Activated CD4-positive, alpha-beta T cell treated with anti-CD3 and anti-CD28 coated beads for 36 hours (primary cell): ENCODE measurements at regions of chr18 and their contacts with region 1.

Region 1: GRCh38 chr18:76450452-76451395 is 44.3 kb downstream of the ZNF516 start:
- DNase-seq: peak; percentile 39
- ATAC-seq: peak; percentile 56
- H3K4me3 Mint-ChIP-seq: peak overlapping the region; percentile 74
- H3K27ac Mint-ChIP-seq: peak overlapping the region; percentile 77
- H3K4me1 Mint-ChIP-seq: peaks cover 41% of the 10 kb centered on the region
- H3K27me3 Mint-ChIP-seq: peaks cover 7% of the 10 kb centered on the region

Region 2: DNA sequence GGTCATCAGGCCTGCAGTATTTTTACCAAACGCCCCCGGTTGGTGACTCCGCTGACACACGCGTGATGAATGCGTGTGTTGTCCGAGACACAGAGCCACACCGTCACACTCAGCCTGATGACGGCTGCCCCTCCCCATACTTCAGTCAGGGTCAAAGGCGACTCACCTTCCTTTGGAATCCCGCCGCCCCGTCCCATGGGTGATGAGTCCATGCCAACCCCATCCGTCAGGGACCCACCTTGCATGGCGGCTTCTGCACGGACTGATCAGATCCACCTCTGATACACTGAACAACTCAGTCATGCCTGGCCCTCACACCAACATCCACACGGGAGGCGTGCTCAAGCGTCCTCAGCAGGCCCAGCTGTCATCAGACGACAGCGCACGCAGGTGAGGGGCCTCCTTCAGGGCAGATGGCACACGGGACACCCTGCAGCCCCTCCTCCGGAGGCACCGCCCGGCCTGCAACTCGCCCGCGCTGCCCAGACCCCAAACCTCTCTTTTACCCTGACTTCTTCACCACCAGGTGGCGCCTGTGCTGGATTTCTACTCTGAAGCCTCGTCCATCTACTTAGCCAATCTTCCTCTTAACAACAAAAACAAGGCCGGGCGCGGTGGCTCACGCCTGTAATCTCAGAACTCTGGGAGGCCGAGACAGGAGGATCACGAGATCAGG is 44.9 kb before region 1 on chr18:
- CTCF ChIA-PET with region 1: no interaction called
- POLR2A ChIA-PET with region 1: no interaction called
- intact Hi-C with region 1: no loop called
- DNase-seq: peak; percentile 72
- ATAC-seq: no peak
- H3K4me3 Mint-ChIP-seq: no peak overlapping the region
- H3K27ac Mint-ChIP-seq: no peak overlapping the region
- H3K4me1 Mint-ChIP-seq: peaks cover 11% of the 10 kb centered on the region
- H3K27me3 Mint-ChIP-seq: no peaks in the 10 kb centered on the region

Region 3: DNA sequence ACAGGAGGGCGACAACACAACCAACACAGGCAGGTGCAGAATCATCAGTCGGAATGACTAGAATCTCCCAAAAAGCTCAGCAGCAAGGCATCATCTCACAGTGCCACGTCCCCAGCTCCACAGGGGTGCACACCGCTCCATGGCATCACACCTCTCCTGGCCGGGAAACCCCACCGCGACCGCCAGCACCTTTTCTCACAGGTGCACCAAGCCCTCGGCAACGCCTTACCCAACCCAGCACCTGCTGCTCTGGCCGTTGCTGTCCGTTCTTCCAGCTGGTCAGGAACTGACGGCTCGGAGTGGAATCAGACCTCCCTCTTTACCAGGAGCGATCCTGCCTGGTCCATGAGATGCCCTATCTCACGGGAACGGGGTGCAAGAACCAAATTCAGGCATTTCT is 16.9 kb before region 1 on chr18:
- CTCF ChIA-PET with region 1: no interaction called
- POLR2A ChIA-PET with region 1: no interaction called
- intact Hi-C with region 1: loop called in 1 of 2 experiments (anchors 1 kb)
- DNase-seq: no peak
- ATAC-seq: no peak
- H3K4me3 Mint-ChIP-seq: no peak overlapping the region
- H3K27ac Mint-ChIP-seq: no peak overlapping the region
- H3K4me1 Mint-ChIP-seq: no peaks in the 10 kb centered on the region
- H3K27me3 Mint-ChIP-seq: no peaks in the 10 kb centered on the region

Region 4: GRCh38 chr18:76492669-76493212 is 42.0 kb after region 1 on chr18:
- CTCF ChIA-PET with region 1: no interaction called
- POLR2A ChIA-PET with region 1: no interaction called
- intact Hi-C with region 1: loop called in 1 of 2 experiments (anchors 2 kb)
- DNase-seq: peak; percentile 100
- ATAC-seq: peak; percentile 85
- H3K4me3 Mint-ChIP-seq: peak overlapping the region; percentile 87
- H3K27ac Mint-ChIP-seq: peak overlapping the region; percentile 89
- H3K4me1 Mint-ChIP-seq: peaks cover 36% of the 10 kb centered on the region
- H3K27me3 Mint-ChIP-seq: peaks cover 33% of the 10 kb centered on the region